ENCODE measurements at regions of chr22 and their contacts with region 1.

Region 1: GRCh38 chr22:39520054-39520891 is at the start of gene ATF4:
- DNase-seq: peak; percentile 99
- ATAC-seq: peak; percentile 81
- H3K4me3 ChIP-seq: peak within 1 kb of the TSS; percentile 85 to 92
- H3K27ac ChIP-seq: peak within 1 kb of the TSS; percentile 99
- H3K4me1 ChIP-seq: peaks cover 17 to 41% of the 10 kb centered on the region in 2 experiments
- H3K27me3 ChIP-seq: no peaks in the 10 kb centered on the region
- CTCF ChIP-seq: no peak
- POLR2A ChIP-seq: peak; percentile 98
- RAD21 ChIP-seq: no peak
- total RNA-seq, gene ATF4: 608 TPM

Region 2: GRCh38 chr22:39490135-39490798 is 30.0 kb before region 1 on chr22:
- CTCF ChIA-PET with region 1: interaction called, 5 read pairs
- POLR2A ChIA-PET with region 1: interaction called, 11 read pairs
- RAD21 ChIA-PET with region 1: interaction called in 1 of 2 experiments, 5 read pairs
- intact Hi-C with region 1: no loop called
- DNase-seq: peak; percentile 79
- ATAC-seq: peak; percentile 98
- H3K4me3 ChIP-seq: no peak overlapping the region
- H3K27ac ChIP-seq: no peak overlapping the region; the same call in 1 of the 2 replicates
- H3K4me1 ChIP-seq: peaks cover 0 to 16% of the 10 kb centered on the region in 2 experiments; a peak in 3 of 4 replicates
- H3K27me3 ChIP-seq: no peaks in the 10 kb centered on the region
- CTCF ChIP-seq: no peak
- POLR2A ChIP-seq: no peak
- RAD21 ChIP-seq: no peak

Region 3: DNA sequence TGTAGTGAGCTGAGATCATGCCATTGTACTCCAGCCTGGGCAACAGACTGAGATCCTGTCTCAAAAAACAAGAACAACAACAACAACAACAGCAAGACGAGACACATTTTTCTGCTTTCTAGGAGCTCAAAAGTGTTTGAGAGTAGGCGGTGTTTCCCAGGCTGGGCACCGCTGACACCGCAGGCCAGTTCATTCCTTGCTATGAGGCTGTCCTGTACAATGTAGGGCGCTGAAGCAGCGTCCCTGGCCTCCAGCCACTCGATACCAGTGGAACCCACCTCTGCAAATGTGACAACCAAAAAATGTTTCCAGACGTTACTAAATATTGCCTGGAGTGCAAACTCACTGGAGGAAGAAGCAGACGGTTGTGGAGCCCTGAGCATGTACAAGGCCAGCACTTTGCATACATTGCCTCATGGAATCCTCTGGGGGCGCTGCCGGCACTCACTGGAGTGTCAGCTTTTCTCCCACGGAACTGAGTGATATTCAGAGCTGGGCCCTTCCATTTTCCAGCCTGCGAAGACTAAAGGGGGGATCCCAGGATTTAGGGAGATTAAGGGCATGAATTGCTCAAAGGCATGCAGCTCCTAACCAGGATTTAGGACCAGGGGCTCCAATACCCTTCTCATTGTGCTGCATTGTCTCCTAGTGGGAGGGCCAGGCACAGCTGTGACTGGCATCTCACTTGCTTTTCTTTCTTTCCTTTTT is 24.0 kb before region 1 on chr22:
- CTCF ChIA-PET with region 1: interaction called, 16 read pairs
- POLR2A ChIA-PET with region 1: interaction called, 37 read pairs
- RAD21 ChIA-PET with region 1: interaction called in 1 of 2 experiments, 5 read pairs
- intact Hi-C with region 1: no loop called
- DNase-seq: peak; percentile 56
- ATAC-seq: peak; percentile 86
- H3K4me3 ChIP-seq: no peak overlapping the region
- H3K27ac ChIP-seq: peak overlapping the region; percentile 43
- H3K4me1 ChIP-seq: peaks cover 14 to 41% of the 10 kb centered on the region in 2 experiments
- H3K27me3 ChIP-seq: no peaks in the 10 kb centered on the region
- CTCF ChIP-seq: peak; percentile 70 to 92 (median 90)
- POLR2A ChIP-seq: no peak
- RAD21 ChIP-seq: peak; percentile 38; the same call in 1 of the 2 replicates

Region 4: DNA sequence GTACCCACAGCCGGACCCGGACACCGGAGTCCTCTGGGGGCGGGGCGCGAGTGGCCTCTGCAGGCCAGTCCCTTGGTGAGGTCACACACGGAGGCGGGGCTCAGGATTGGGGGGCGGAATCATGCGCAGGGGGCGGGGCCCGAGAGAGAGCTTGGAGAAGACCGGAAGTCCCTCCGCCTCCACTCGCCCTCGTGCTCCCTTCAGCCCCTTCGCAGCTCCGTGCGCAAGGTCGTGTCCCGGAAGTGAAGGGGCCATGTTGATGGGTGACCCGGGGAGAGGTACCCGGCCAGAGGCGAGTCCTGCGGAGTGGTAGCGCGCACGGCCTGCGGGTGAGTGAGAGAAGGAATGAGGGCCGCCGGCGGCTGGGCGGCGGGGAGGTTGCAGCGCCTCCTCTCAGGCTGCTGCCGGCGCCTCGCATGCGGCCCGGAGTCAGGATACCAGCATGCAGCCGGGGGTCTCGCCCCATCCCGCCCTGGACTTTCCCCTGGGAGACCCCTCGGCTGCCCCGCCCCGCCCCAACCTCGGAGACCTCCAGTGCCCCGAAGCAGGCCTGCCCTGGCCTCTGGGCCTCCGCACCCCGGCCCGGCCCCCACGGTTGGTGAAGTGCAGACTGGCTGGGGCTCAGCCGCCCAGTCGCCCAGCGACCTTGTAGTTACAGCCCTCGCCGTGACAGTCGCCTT is 18.0 kb before region 1 on chr22 and contains the start of gene MIEF1:
- CTCF ChIA-PET with region 1: interaction called, 19 read pairs
- POLR2A ChIA-PET with region 1: interaction called, 37 read pairs
- RAD21 ChIA-PET with region 1: interaction called, 3 read pairs
- intact Hi-C with region 1: loop called (anchors 2 kb)
- DNase-seq: peak; percentile 94
- ATAC-seq: peak; percentile 93
- H3K4me3 ChIP-seq: peak within 1 kb of the TSS; percentile 92 to 97
- H3K27ac ChIP-seq: peak within 1 kb of the TSS; percentile 70
- H3K4me1 ChIP-seq: peaks cover 16 to 29% of the 10 kb centered on the region in 2 experiments
- H3K27me3 ChIP-seq: no peaks in the 10 kb centered on the region
- CTCF ChIP-seq: no peak
- POLR2A ChIP-seq: peak; percentile 65
- RAD21 ChIP-seq: no peak
- total RNA-seq, gene MIEF1: 42.8 TPM